Spleen (tissue), 13 donors: ENCODE measurements at regions of chr20 and their contacts with region 1.

Region 1: GRCh38 chr20:59253779-59254319 is 46.6 kb upstream of the EDN3 start:
- DNase-seq: no peak
- H3K4me3 ChIP-seq: no peak overlapping the region
- H3K27ac ChIP-seq: peak overlapping the region in 5 of 8 donors; percentile 8 to 82 (median 50)
- H3K4me1 ChIP-seq: peaks cover 0 to 43% (median 11%) of the 10 kb centered on the region in 6 donors
- H3K27me3 ChIP-seq: no peaks in the 10 kb centered on the region
- CTCF ChIP-seq: peak in 1 of 11 experiments; percentile 4
- POLR2A ChIP-seq: no peak

Region 2: DNA sequence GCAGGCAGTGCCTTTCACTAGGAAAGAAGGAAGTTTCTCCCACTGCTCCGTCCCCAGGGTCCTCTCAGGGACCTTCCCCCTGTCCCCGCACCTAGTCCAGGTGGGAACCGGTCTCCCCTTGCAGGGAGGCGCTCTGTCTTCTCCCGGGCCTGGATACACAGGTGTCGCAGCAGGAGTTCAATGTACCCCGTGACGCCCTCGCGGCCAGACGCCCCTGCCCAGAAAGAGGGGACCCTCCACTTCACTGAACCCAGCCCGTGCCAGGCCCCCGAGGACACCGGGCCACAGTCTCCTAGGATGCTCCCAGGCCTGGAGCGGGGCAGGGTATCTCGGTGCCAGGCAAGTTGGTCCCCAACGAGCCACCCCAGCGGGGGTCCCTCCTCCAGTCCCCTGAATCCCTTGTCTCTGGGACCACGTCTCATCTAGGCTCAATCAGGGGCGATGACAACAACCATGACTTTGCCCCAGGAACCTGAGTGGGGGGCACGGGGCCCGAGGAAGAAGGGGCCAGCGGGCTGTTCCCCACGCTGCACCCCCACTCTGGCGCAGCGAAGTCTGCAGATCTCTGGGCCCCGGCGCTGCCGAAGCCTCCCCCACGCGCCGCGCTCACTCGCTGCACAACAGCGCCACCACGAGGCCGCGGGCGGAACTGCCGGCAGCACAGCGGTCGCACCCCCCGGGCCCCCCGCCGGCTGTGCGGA is 149.6 kb after region 1 on chr20:
- intact Hi-C with region 1: loop called (anchors 10 kb)
- DNase-seq: peak; percentile 90
- H3K4me3 ChIP-seq: peak overlapping the region in 2 of 8 donors; percentile 15 to 54
- H3K27ac ChIP-seq: no peak overlapping the region
- H3K4me1 ChIP-seq: peaks cover 11 to 25% (median 18%) of the 10 kb centered on the region in 6 donors
- H3K27me3 ChIP-seq: peaks cover 3 to 77% (median 36%) of the 10 kb centered on the region in 7 donors
- CTCF ChIP-seq: peak; percentile 90 to 98 (median 92)
- POLR2A ChIP-seq: no peak

Region 3: DNA sequence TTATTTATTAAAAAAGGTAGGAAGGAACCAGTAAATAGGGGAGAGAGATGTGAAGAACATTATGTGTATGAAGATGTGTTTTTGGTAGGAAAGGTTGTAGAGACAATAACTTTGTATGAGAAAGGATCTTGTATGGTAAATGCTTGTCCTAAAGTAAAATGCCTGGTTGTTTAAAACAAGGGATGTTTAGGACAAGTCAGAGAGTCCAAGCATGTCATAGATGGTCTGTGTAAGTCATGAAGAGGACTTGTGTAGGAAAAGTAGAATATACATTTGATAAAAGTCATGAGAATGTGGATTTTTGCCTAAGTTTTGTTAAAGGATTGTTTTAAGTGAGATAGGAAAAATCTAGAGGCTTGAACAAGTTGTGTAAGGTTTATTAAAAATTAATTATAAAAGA is 1029.4 kb after region 1 on chr20:
- intact Hi-C with region 1: no loop called
- DNase-seq: no peak
- H3K4me3 ChIP-seq: no peak overlapping the region
- H3K27ac ChIP-seq: no peak overlapping the region
- H3K4me1 ChIP-seq: no peaks in the 10 kb centered on the region
- H3K27me3 ChIP-seq: no peaks in the 10 kb centered on the region
- CTCF ChIP-seq: no peak
- POLR2A ChIP-seq: no peak